Left ventricle myocardium superior (tissue), 1 donor: ENCODE measurements at regions of chr5 and their contacts with region 1.

Region 1: GRCh38 chr5:114449860-114450421 is 88.1 kb downstream of the KCNN2 start:
- DNase-seq: peak; percentile 81
- ATAC-seq: peak; percentile 99

Region 2: GRCh38 chr5:113682503-113683136 is 767.3 kb before region 1 on chr5:
- intact Hi-C with region 1: loop called (anchors 10 kb)
- DNase-seq: no peak
- ATAC-seq: no peak

Region 3: DNA sequence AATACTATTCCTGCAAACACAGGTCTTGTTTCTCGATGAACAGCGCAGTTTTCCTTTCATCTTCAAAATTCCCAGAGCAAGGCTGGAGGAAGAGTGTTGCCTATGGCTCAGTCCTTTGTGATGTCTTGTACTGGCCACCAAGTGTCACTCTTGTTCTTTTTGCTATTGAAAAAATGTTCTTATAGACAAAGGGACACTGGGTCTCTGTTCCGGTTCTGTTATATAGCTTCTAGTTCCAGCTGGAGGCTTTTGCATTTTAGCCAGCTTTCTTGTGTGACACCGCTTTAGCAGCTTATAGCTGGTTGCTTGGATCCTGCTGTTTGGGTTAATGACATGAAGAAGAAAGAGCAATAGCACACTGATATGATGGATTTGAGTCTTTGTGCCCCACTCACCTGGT is 431.8 kb before region 1 on chr5:
- intact Hi-C with region 1: loop called (anchors 10 kb)
- DNase-seq: no peak
- ATAC-seq: peak; percentile 61

Region 4: DNA sequence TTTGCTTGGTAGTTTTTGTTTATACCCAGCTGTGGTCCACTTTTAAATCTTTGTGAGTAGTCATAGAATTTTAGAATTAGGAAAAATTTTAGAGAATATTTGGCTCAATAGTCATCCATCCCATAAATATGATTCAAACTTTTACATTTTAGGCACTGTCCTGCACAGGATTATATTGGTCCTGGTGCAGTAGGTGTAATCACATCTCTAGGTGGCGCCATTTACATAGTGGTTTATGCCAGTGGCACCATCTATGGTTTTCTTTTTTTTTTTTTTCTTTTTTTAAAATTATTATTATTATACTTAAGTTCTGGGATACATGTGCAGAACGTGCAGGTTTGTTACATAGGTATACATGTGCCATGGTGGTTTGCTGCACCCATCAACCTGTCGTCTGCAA is 348.8 kb before region 1 on chr5:
- intact Hi-C with region 1: loop called (anchors 10 kb)
- DNase-seq: no peak
- ATAC-seq: peak; percentile 52